Right cardiac atrium (tissue), 5 donors: ENCODE measurements at regions of chr17 and their contacts with region 1.

Region 1: DNA sequence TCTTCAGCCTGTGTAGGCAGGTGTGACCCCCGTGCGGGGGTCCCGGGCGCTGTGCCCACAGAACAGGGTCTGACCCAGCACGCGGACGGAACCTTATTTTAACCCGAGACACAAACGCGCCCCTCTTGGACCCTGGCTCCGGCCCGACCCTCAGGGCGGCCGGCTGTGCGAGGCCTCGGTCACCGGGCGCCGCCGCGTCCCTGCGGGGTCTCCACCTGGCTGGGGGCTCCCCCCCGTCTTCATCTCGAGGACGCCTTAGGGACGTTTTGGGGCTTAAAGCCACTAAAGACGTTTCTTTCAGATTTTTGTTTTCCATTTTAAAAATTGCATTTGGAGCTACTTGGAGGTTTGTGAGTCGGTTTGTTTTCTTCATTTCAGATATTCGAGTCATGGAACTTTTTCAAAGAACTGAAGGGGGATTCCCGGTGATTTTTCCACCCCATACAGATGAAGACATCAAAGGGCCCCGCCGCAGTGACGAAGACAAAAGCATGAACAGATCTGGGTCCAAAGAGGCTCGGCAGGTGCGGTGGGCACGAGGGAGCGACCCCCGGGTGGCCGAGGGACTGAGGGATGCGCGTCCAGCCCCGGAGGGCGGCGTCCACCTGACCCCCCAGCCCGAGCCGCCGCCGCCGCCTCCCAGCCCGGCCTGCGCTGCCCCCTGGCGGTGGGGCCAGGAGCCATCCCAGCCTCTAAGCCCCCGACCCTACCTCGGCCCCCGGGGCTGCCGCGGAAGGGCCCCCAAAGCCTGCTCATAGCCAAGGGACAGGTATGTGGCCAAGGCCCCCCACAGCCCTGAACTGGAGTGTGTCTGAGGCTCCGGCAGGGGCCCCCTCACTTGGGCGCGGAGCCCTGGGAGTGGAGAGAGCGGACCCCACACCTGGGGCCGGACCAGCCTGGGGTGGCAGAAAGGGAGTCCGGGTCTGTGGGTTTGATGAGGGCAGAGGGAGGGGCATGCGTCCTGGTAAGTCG is 3.8 kb upstream of the CD7 start:
- DNase-seq: peak in 2 of 3 donors; percentile 73 to 78
- ATAC-seq: peak; percentile 17 to 48
- H3K4me3 ChIP-seq: no peak overlapping the region
- H3K27ac ChIP-seq: no peak overlapping the region
- H3K4me1 ChIP-seq: no peaks in the 10 kb centered on the region
- H3K27me3 ChIP-seq: no peaks in the 10 kb centered on the region

Region 2: GRCh38 chr17:82205719-82206508 is 115.3 kb before region 1 on chr17:
- intact Hi-C with region 1: loop called in 3 of 4 experiments (anchors 2 to 10 kb)
- DNase-seq: peak; percentile 87 to 93 (median 93)
- ATAC-seq: peak; percentile 84
- H3K4me3 ChIP-seq: no peak overlapping the region
- H3K27ac ChIP-seq: peak overlapping the region; percentile 0
- H3K4me1 ChIP-seq: no peaks in the 10 kb centered on the region
- H3K27me3 ChIP-seq: no peaks in the 10 kb centered on the region

Region 3: GRCh38 chr17:82230627-82231311 is 90.5 kb before region 1 on chr17:
- intact Hi-C with region 1: loop called (anchors 5 to 10 kb)
- DNase-seq: peak; percentile 92 to 97 (median 97)
- ATAC-seq: peak; percentile 76 to 81
- H3K4me3 ChIP-seq: peak overlapping the region; percentile 69
- H3K27ac ChIP-seq: peak overlapping the region; percentile 91
- H3K4me1 ChIP-seq: peaks cover 4% of the 10 kb centered on the region
- H3K27me3 ChIP-seq: no peaks in the 10 kb centered on the region

Region 4: GRCh38 chr17:82236142-82236981 is 84.9 kb before region 1 on chr17:
- intact Hi-C with region 1: loop called (anchors 5 to 10 kb)
- DNase-seq: peak; percentile 64 to 87 (median 85)
- ATAC-seq: peak in 1 of 2 donors; percentile 0
- H3K4me3 ChIP-seq: no peak overlapping the region
- H3K27ac ChIP-seq: no peak overlapping the region
- H3K4me1 ChIP-seq: peaks cover 6% of the 10 kb centered on the region
- H3K27me3 ChIP-seq: no peaks in the 10 kb centered on the region

Region 5: DNA sequence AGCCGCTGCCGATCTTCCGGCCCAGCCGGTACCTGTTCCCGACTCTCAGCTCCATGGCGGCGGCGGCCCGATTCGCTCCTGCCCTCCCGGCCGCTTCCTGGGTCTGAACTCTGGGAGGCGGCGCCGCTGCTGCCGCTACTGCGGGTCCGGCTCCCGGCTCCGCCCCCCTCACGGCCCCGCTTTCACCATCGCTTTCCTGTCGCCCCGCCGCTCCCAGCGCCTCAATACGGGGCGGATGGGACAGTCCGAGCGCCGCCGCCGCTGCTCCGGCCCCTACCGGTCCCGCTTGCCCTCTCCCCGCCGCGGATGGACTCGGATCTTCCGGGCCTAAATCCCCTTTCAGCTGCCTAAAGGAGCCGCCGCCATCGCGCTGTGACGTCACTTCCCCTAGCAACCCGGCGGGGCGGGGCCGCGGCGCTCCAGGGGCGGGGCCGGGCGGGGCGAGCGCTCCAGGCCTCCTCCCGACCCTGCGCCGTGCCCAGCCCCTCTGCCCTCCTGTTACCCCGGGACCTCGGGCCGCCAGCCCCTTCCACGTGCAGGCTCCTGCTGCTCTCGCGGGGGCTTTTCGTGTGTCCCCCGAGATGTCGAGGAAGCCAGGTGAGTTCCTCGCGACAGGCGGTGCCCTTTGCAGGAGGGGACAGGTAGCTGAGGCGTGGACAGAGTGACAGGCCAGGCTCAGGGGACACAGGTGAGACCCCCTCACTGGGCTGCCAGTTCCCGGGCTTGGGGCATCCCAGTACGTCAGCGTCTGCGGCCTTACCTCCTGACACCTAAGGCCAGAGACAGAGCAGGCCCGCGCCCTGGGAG is 47.7 kb before region 1 on chr17 and contains the start of gene CSNK1D:
- intact Hi-C with region 1: no loop called
- DNase-seq: peak; percentile 92 to 98 (median 97)
- ATAC-seq: peak; percentile 93 to 95
- H3K4me3 ChIP-seq: peak within 1 kb of the TSS; percentile 98
- H3K27ac ChIP-seq: peak within 1 kb of the TSS; percentile 80
- H3K4me1 ChIP-seq: peaks cover 11% of the 10 kb centered on the region
- H3K27me3 ChIP-seq: no peaks in the 10 kb centered on the region
- total RNA-seq, gene CSNK1D: 68.8 to 81.7 (median 77.4) TPM